ENCODE measurements at regions of chr10 and their contacts with region 1.

Region 1: GRCh38 chr10:59654007-59654406 is 55.6 kb downstream of the SLC16A9 start:
- DNase-seq: no peak
- ATAC-seq: no peak
- H3K4me3 ChIP-seq: no peak overlapping the region
- H3K27ac ChIP-seq: no peak overlapping the region
- H3K4me1 ChIP-seq: peaks cover 16% of the 10 kb centered on the region
- H3K27me3 ChIP-seq: no peaks in the 10 kb centered on the region
- CTCF ChIP-seq: no peak

Region 2: DNA sequence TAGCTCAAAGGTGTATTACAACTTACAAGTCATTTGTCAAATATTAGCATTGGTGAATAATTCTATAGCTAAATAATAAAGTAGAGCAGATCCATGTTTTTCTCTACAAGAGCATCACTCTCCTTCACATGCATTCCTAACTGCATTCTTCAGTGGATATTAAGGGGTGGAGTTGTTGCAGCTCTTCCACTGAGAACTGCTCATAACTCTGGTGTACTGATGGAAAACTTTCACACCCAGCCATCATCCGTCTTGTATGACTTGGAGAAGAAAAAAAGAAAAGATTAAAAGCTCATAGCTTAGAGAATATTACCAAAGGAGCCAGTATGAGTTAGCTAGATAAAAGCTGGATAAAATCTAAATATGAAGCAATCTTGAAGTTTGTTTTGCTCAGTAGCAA is 281.5 kb before region 1 on chr10:
- CTCF ChIA-PET with region 1: no interaction called
- POLR2A ChIA-PET with region 1: no interaction called
- intact Hi-C with region 1: no loop called
- DNase-seq: no peak
- ATAC-seq: no peak
- H3K4me3 ChIP-seq: no peak overlapping the region
- H3K27ac ChIP-seq: no peak overlapping the region
- H3K4me1 ChIP-seq: no peaks in the 10 kb centered on the region
- H3K27me3 ChIP-seq: 0 out of 2 replicates have a peak, but pooled peaks cover 5% of the 10 kb centered on the region
- CTCF ChIP-seq: no peak

Region 3: GRCh38 chr10:59678884-59679301 is 24.9 kb after region 1 on chr10:
- CTCF ChIA-PET with region 1: no interaction called
- POLR2A ChIA-PET with region 1: no interaction called
- intact Hi-C with region 1: loop called (anchors 2 kb)
- DNase-seq: peak; percentile 95
- ATAC-seq: peak; percentile 72
- H3K4me3 ChIP-seq: no peak overlapping the region
- H3K27ac ChIP-seq: peak overlapping the region; percentile 77
- H3K4me1 ChIP-seq: peaks cover 54% of the 10 kb centered on the region
- H3K27me3 ChIP-seq: no peaks in the 10 kb centered on the region
- CTCF ChIP-seq: no peak

Region 4: DNA sequence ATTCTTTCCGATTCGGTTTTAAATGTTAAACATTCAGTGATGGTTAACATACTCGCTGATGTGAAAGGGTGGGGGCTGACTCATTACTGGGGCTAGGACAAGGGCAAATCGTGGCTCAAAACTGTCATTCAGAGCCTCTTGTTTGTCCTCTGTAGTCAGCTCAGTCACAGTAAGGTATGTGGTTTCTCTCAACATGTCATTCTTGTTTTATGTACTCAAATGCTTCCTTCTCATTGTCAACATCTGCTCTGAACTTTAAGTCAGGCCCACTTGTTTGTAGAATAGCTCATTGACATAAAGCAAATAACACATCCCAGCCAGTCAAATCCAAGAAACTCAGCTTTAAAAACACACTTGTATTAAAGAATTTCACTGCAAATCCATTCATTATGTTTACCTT is 48.3 kb after region 1 on chr10:
- CTCF ChIA-PET with region 1: no interaction called
- POLR2A ChIA-PET with region 1: no interaction called
- intact Hi-C with region 1: loop called (anchors 1 kb)
- DNase-seq: peak; percentile 97
- ATAC-seq: peak; percentile 100
- H3K4me3 ChIP-seq: no peak overlapping the region
- H3K27ac ChIP-seq: peak overlapping the region; percentile 60
- H3K4me1 ChIP-seq: peaks cover 18% of the 10 kb centered on the region
- H3K27me3 ChIP-seq: no peaks in the 10 kb centered on the region
- CTCF ChIP-seq: no peak

Region 5: GRCh38 chr10:59779756-59780533 is 125.9 kb after region 1 on chr10:
- CTCF ChIA-PET with region 1: no interaction called
- POLR2A ChIA-PET with region 1: interaction called, 11 read pairs
- intact Hi-C with region 1: no loop called
- DNase-seq: no peak
- ATAC-seq: no peak
- H3K4me3 ChIP-seq: no peak overlapping the region
- H3K27ac ChIP-seq: no peak overlapping the region
- H3K4me1 ChIP-seq: no peaks in the 10 kb centered on the region
- H3K27me3 ChIP-seq: no peaks in the 10 kb centered on the region
- CTCF ChIP-seq: no peak

Region 6: GRCh38 chr10:59906417-59907202 is 252.6 kb after region 1 on chr10 and contains the start of gene CCDC6:
- CTCF ChIA-PET with region 1: no interaction called
- POLR2A ChIA-PET with region 1: no interaction called
- intact Hi-C with region 1: no loop called
- DNase-seq: peak; percentile 98
- ATAC-seq: peak; percentile 77
- H3K4me3 ChIP-seq: peak within 1 kb of the TSS; percentile 93
- H3K27ac ChIP-seq: peak within 1 kb of the TSS; percentile 70
- H3K4me1 ChIP-seq: peaks cover 45% of the 10 kb centered on the region
- H3K27me3 ChIP-seq: no peaks in the 10 kb centered on the region
- CTCF ChIP-seq: peak; percentile 77
- total RNA-seq, gene CCDC6: 37.6 and 46.1 TPM in 2 replicates